Left cardiac atrium (tissue), 4 donors: ENCODE measurements at regions of chr3 and their contacts with region 1.

Region 1: GRCh38 chr3:42539869-42540714 is 37.6 kb downstream of the VIPR1 start:
- DNase-seq: peak; percentile 49
- ATAC-seq: peak; percentile 23 to 26

Region 2: DNA sequence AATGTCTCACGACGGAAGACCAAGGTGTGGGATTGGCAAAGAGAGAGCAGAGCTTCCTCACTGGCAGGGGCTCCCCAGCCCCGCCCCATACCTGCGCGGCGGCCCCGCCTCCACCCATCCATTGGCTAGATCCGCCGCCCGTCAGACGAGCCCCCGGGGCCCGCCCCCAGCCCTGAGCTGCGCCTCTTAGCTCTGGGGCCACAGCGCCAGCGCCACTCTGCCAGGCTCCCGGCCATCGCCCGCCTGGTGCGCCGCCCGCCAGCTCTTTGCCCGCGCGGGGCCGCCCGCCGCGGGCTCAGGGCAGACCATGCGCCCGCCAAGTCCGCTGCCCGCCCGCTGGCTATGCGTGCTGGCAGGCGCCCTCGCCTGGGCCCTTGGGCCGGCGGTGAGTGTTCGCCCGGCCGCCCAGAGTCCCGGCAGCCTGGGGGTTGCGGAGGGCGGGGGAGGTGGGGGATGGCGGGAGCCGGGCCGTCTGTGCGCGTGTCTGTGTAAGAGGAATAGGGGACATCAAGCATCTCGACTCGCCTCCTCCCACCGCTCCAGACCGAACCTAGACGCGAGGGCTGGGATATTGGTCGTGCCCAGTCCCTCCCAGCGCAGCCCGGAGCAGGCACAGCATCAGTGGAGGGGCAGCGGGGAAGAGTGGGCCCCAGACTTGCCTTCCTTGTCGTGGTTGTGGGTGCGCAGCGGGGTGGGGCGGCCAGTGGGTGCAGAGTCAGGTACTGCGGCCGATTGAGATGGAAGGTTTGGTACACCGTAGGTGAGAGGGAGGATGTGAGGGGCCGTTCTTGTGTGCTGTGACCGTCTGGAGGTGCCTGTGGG is 37.5 kb before region 1 on chr3 and contains the start of gene VIPR1:
- intact Hi-C with region 1: loop called (anchors 2 to 5 kb)
- DNase-seq: peak; percentile 80
- ATAC-seq: peak; percentile 91 to 97
- total RNA-seq, gene VIPR1: 4.9 to 5.9 TPM

Region 3: DNA sequence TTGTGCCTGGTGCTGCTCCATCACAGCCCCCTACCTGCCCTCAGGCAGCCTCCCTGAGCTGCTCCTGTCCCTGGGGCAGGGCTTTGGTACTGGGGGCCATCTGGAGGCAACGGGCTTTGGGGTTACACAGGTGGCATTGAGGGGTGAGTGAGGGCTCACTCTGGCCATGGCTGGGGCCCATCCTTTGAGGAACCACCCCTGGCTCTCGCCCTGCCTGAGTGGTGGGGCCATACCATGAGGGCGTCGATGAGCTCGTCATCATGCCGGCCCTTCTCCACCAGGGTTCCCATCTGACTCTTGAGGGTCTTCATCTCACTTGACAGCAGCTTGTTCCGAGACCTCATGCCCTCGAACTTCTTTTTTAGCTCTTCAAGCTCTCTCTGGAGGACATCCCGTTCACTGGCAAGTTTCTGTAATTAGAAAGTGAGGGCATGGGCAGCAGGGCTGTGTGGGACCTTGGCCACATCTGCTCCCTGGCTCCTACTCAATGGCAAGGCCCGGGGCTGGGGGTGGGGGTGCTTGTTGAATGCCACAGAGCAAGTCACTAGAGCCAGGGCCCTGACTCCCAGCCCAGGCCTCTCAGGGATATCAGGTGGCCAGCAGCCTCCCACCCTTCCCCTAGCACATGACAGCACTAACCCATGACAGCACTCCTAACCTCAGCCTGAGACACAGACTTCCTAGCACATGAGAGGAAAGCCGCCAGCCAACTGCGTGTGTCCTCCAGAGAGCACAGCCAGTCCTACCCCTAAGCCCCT is 199.5 kb after region 1 on chr3:
- intact Hi-C with region 1: no loop called
- DNase-seq: peak; percentile 86
- ATAC-seq: peak; percentile 94 to 95

Region 4: DNA sequence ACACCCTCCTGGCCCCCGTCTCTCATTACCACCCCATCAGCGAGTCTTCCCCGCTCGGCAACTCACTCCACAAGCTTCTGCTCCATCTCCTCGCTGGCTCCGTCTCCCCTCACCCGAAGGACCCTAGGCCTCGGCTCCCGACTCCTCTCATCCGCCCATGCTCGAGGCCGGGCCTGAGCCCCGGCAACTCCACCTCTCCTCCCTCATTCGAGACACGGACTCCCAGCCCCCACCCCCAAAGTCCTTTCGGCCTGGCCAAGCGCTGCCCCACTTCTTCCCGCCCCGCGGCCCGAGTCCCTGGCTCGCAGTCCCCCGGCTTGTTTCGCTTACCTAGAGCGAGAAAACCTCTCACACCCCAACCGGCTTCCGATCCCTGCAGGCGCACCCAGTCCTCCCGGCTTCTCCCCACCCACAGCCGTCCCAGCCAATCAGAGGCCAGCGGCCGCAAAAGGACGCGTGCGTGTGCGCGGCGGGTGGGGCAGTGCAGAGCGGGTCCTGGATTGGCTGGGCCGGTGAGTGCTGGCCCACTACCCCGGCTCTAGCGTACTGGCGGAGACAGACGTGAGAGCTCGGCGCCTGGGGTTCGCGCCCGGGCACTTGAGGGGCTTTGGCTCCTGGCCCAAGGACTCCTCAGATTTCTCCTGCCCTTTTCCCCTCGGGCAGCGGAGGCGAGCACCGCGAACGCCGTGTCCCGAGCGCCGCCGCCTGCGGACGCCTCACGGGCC is 264.2 kb after region 1 on chr3 and contains the start of gene HIGD1A:
- intact Hi-C with region 1: no loop called
- DNase-seq: peak; percentile 96
- ATAC-seq: peak; percentile 99 to 100
- total RNA-seq, gene HIGD1A: 200 to 270 TPM